AG04449 (cell line): ENCODE measurements at regions of chr15 and their contacts with region 1.

Region 1: GRCh38 chr15:101008158-101009139 is 89.3 kb downstream of the LRRK1 start:
- DNase-seq: no peak
- H3K4me3 ChIP-seq: peak overlapping the region; percentile 59
- CTCF ChIP-seq: peak; percentile 99

Region 2: GRCh38 chr15:100635406-100636071 is 372.9 kb before region 1 on chr15:
- CTCF ChIA-PET with region 1: interaction called, 67 read pairs
- POLR2A ChIA-PET with region 1: no interaction called
- DNase-seq: no peak
- H3K4me3 ChIP-seq: no peak overlapping the region
- CTCF ChIP-seq: no peak

Region 3: DNA sequence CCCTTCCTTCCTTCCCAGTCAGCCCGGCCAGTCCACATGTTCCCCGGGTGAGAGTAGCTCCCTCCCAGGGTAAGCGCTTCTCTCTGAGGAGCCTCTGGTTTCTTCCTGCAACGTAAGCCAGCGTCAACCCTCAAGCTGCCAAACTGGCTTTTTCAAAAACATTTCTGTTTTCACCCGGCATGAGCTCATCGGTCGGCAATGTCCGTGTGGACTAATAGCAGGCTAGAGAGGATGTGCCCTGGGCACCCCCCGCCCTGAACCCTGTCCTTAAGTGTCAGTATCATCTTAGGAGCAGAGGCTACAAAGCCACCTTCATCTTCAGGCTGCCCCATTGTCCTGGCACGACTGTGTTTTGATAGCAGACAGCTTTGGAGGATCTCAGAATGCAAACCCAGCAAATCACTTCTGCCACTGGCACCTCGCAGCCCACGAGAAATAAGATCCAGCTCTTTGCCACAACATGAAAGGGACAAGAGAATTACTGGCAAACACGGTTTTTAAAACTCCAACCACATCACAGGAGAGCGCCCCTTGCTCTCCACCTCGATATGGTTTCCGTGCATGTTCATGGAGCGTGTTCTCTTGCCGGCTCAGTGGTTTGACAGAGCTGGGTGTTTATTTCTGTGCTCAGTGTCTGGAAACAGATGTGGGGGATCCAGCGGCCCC is 118.9 kb before region 1 on chr15:
- CTCF ChIA-PET with region 1: interaction called, 43 read pairs
- POLR2A ChIA-PET with region 1: no interaction called
- DNase-seq: peak; percentile 52
- H3K4me3 ChIP-seq: peak overlapping the region; percentile 6
- CTCF ChIP-seq: no peak

Region 4: DNA sequence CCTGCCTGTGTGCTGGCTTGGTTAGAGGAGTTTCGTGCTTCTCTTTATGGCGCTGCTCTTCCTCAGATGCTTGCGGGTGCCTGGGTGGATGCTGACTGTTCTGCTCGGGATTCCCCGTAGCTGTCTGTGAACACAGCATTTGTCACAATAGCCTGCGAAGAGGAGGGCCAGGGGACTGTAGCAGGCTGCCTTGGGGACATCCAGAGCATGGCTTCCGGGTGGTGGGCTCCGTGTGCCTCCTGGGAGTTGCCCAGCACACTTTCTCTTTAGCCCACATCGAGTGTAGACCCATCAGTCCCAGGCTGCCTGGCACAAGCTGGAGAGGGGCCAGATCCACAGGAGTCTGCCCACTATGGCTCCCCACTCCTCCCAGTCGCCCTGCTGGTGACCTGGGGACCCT is 66.9 kb before region 1 on chr15:
- CTCF ChIA-PET with region 1: interaction called, 23 read pairs
- POLR2A ChIA-PET with region 1: no interaction called
- DNase-seq: no peak
- H3K4me3 ChIP-seq: no peak overlapping the region
- CTCF ChIP-seq: no peak

Region 5: DNA sequence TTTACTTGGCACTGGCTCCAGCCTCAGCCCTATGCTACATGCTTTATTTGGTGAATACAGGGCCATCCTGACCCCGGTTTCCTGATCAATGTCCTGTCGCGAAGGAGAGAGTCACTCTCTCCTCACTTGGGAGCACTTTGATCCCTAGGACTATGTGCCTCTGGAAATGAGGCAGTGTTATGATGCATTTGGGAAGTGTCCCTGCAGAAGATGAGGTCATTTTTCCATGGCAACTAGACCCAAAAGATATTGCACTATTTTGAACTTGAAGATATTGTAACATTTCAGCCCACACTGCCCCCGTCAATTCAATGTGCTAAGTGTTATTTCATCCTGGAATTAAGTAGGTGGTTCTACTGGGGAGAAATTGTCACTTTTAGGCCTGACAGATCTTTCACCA is 21.3 kb before region 1 on chr15:
- CTCF ChIA-PET with region 1: interaction called, 159 read pairs
- POLR2A ChIA-PET with region 1: no interaction called
- DNase-seq: no peak
- H3K4me3 ChIP-seq: no peak overlapping the region
- CTCF ChIP-seq: no peak

Region 6: GRCh38 chr15:101267320-101268104 is 259.1 kb after region 1 on chr15:
- CTCF ChIA-PET with region 1: interaction called, 43 read pairs
- POLR2A ChIA-PET with region 1: no interaction called
- DNase-seq: peak; percentile 31
- H3K4me3 ChIP-seq: no peak overlapping the region
- CTCF ChIP-seq: no peak

Region 7: GRCh38 chr15:101469520-101470288 is 461.3 kb after region 1 on chr15:
- CTCF ChIA-PET with region 1: no interaction called
- POLR2A ChIA-PET with region 1: no interaction called
- DNase-seq: no peak
- H3K4me3 ChIP-seq: no peak overlapping the region
- CTCF ChIP-seq: no peak